ENCODE measurements at regions of chr6 and their contacts with region 1.

Region 1: GRCh38 chr6:131923356-131923755 is 27.8 kb downstream of the CCN2 start:
- DNase-seq: no peak
- ATAC-seq: peak in 1 of 2 donors; percentile 49

Region 2: GRCh38 chr6:132161283-132161682 is 237.9 kb after region 1 on chr6:
- intact Hi-C with region 1: loop called in 1 of 2 experiments (anchors 2 kb)
- DNase-seq: no peak
- ATAC-seq: peak; percentile 63 to 70

Region 3: GRCh38 chr6:132218059-132218696 is 294.8 kb after region 1 on chr6:
- intact Hi-C with region 1: loop called (anchors 1 to 5 kb)
- DNase-seq: no peak
- ATAC-seq: peak in 1 of 2 donors; percentile 54

Region 4: GRCh38 chr6:132483779-132484679 is 560.7 kb after region 1 on chr6:
- intact Hi-C with region 1: loop called in 1 of 2 experiments (anchors 10 kb)
- DNase-seq: no peak
- ATAC-seq: peak; percentile 65 to 79